GM12878 (cell line): ENCODE measurements at regions of chr11 and their contacts with region 1.

Region 1: GRCh38 chr11:17221968-17222367 is 14.2 kb upstream of the PIK3C2A start:
- DNase-seq: no peak
- ATAC-seq: no peak
- H3K4me3 ChIP-seq: no peak overlapping the region
- H3K27ac ChIP-seq: no peak overlapping the region
- H3K4me1 ChIP-seq: no peaks in the 10 kb centered on the region
- H3K27me3 ChIP-seq: no peaks in the 10 kb centered on the region; a peak in 2 of 4 replicates
- CTCF ChIP-seq: no peak
- EP300 ChIP-seq: no peak
- POLR2A ChIP-seq: no peak
- RAD21 ChIP-seq: no peak

Region 2: DNA sequence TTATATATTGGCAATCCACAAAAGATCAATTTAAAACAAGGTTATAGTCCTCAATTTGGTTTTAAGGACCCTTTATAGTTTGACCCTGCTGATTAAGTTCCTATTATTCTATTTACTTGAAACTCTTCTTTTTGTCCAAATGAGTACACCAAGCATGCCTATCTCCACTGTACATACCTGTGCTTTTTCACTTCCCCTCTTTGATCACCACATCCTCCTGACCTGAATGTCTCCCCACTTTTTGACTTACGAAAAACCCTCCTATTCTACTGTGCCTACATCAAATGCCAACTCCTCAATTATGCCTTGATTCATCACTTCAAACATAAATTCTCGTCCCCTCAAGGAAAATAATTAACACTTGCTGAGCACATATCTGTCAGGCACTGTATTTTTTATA is 979.2 kb before region 1 on chr11:
- CTCF ChIA-PET with region 1: no interaction called
- POLR2A ChIA-PET with region 1: no interaction called
- RAD21 ChIA-PET with region 1: no interaction called
- SMC1A ChIA-PET with region 1: no interaction called
- in situ Hi-C with region 1: no loop called
- intact Hi-C with region 1: no loop called
- DNase-seq: no peak
- ATAC-seq: peak; percentile 71
- H3K4me3 ChIP-seq: no peak overlapping the region
- H3K27ac ChIP-seq: no peak overlapping the region
- H3K4me1 ChIP-seq: no peaks in the 10 kb centered on the region
- H3K27me3 ChIP-seq: no peaks in the 10 kb centered on the region
- CTCF ChIP-seq: no peak
- EP300 ChIP-seq: 0 out of 4 replicates have a peak, but pooled peaks of 1 of the 2 experiments have one; percentile 12
- POLR2A ChIP-seq: no peak
- RAD21 ChIP-seq: no peak

Region 3: DNA sequence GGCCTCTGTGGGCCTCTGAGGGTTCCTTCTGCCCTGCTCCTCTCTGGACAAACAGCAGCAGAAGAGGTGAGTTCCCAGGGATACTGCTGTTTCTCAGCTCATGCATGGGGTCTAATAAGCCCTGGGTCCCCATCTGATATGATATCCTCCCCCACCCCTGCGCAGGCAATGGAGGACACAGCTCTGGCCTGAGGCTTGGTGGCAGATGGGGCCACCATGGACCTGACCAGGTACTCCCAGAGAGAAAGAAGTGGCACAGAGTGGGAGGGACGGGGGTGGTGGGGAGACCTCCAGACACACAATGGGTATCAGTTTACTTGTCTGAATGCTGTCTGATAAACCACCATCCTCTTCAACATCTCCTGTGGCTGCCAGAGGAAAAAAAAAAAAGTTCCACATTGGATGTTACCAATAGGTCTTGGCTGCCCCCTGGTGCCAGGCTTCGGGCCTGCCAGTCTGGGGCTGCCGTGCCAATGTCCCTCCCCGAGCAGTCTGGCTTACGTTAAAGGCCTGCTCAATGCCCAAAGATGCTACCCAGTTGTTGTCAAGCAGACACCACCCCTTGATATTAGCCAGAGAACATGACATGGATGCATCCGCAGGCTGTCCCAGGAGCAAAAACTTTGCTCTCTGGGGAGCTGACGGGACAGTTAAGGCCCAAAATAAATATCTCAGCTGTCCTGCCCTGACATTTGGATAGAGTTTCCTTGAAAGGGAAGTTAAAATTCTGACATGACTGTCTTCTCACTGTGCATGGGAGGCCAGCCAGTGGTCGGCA is 282.6 kb after region 1 on chr11:
- CTCF ChIA-PET with region 1: no interaction called
- POLR2A ChIA-PET with region 1: no interaction called
- RAD21 ChIA-PET with region 1: no interaction called
- SMC1A ChIA-PET with region 1: no interaction called
- in situ Hi-C with region 1: loop called (anchors 5 kb)
- intact Hi-C with region 1: no loop called
- DNase-seq: no peak
- ATAC-seq: peak; percentile 91
- H3K4me3 ChIP-seq: no peak overlapping the region
- H3K27ac ChIP-seq: no peak overlapping the region
- H3K4me1 ChIP-seq: no peaks in the 10 kb centered on the region; the same call in 1 of the 2 replicates
- H3K27me3 ChIP-seq: no peaks in the 10 kb centered on the region; a peak in 2 of 4 replicates
- CTCF ChIP-seq: peak; percentile 79 to 92 (median 85)
- EP300 ChIP-seq: no peak
- POLR2A ChIP-seq: no peak
- RAD21 ChIP-seq: peak; percentile 80

Region 4: GRCh38 chr11:17544181-17544622 is 322.2 kb after region 1 on chr11 and contains the start of gene USH1C:
- CTCF ChIA-PET with region 1: no interaction called
- POLR2A ChIA-PET with region 1: no interaction called
- RAD21 ChIA-PET with region 1: no interaction called
- SMC1A ChIA-PET with region 1: no interaction called
- in situ Hi-C with region 1: no loop called
- intact Hi-C with region 1: no loop called
- DNase-seq: no peak
- ATAC-seq: no peak
- H3K4me3 ChIP-seq: no peak within 1 kb of the TSS
- H3K27ac ChIP-seq: no peak within 1 kb of the TSS
- H3K4me1 ChIP-seq: no peaks in the 10 kb centered on the region
- H3K27me3 ChIP-seq: peaks cover 3 to 6% of the 10 kb centered on the region in 2 experiments
- CTCF ChIP-seq: no peak
- EP300 ChIP-seq: no peak
- POLR2A ChIP-seq: no peak
- RAD21 ChIP-seq: no peak
- polyA plus RNA-seq, gene USH1C: not detected